ENCODE measurements at regions of chr22 and their contacts with region 1.

Region 1: GRCh38 chr22:29553351-29554224 is at the start of gene THOC5:
- DNase-seq: peak; percentile 86 to 91 (median 87)
- H3K4me3 ChIP-seq: peak within 1 kb of the TSS; percentile 69 to 95
- H3K4me3 Mint-ChIP-seq: peak within 1 kb of the TSS; percentile 92 to 99 (median 97)
- H3K27ac ChIP-seq: peak within 1 kb of the TSS; percentile 65
- H3K27ac Mint-ChIP-seq: peak within 1 kb of the TSS; percentile 87 to 99 (median 98)
- H3K4me1 ChIP-seq: peaks cover 8% of the 10 kb centered on the region
- H3K4me1 Mint-ChIP-seq: peaks cover 14 to 40% (median 27%) of the 10 kb centered on the region in 4 donors
- H3K27me3 ChIP-seq: no peaks in the 10 kb centered on the region
- H3K27me3 Mint-ChIP-seq: no peaks in the 10 kb centered on the region
- total RNA-seq, gene THOC5: 57.6 to 57.7 TPM

Region 2: DNA sequence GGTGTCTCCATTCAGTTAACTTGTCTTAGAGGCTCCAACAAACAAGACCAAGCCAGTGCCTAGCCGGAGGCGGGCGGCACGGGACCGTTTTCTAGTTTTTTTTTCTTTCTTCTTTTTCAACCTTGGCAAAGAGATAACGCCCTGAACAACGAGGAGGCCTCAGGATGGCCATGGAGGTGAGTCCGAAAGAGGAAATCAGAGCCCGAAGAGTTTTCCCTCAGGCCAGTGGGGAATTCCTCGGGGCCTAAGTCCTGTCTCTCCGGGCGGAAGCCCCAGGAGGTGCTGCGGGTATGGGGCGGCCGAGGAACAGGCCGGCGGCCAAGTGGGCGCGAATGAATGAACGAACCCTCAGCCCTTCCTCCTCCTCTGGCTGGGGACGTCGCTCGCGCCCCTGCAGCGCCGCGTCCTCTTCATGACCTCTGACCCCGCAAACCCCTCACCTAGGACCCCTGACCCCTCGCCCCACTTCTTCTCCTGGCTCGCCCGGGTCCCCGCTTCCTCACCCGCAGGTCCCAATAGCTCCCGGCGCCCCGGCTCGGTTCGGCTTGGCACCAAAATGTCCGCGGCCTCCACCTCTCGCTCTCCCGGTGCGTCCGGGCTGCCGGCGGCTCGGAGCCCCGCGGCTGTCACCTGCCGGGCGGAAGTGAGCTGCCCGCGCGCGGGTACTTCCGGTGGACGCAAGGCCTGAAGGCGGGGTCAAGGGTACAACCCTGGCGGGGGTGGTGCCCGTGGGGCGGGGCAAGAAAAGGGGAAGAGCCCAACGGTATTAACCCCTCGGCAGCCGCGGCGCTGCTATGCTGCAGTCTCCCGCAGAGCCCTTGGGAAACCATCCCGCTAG is 165.4 kb before region 1 on chr22 and contains the start of gene AP1B1:
- CTCF ChIA-PET with region 1: interaction called, 4 read pairs
- POLR2A ChIA-PET with region 1: interaction called, 4 read pairs
- intact Hi-C with region 1: loop called (anchors 2 kb)
- DNase-seq: peak; percentile 87 to 91 (median 88)
- H3K4me3 ChIP-seq: peak within 1 kb of the TSS; percentile 64 to 77
- H3K4me3 Mint-ChIP-seq: peak within 1 kb of the TSS; percentile 89 to 98 (median 93)
- H3K27ac ChIP-seq: peak within 1 kb of the TSS; percentile 86
- H3K27ac Mint-ChIP-seq: peak within 1 kb of the TSS; percentile 90 to 96 (median 95)
- H3K4me1 ChIP-seq: peaks cover 54% of the 10 kb centered on the region
- H3K4me1 Mint-ChIP-seq: peaks cover 26 to 54% (median 39%) of the 10 kb centered on the region in 4 donors
- H3K27me3 ChIP-seq: no peaks in the 10 kb centered on the region
- H3K27me3 Mint-ChIP-seq: no peaks in the 10 kb centered on the region
- total RNA-seq, gene AP1B1: 41.3 to 42.7 TPM

Region 3: DNA sequence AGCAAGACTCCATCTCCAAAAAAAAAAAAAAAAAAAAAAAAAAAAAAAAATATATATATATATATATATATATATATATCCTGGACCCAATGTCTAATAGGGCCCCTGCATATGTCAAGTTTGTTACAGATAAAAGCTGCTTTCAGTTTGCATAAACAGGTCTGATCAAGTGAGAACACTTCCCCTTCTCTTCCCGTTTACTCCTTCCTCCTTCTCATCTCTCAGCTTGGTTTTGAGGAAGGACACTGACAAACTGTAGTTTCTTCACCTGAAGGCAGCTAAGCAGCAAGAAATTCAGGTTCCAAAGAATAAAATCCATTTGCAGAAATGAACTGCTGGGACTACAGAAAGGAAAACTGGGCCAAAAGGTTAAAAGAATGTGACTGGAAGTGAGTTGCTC is 11.7 kb before region 1 on chr22:
- CTCF ChIA-PET with region 1: interaction called, 4 read pairs
- POLR2A ChIA-PET with region 1: interaction called, 11 read pairs
- intact Hi-C with region 1: no loop called
- DNase-seq: no peak
- H3K4me3 ChIP-seq: no peak overlapping the region
- H3K4me3 Mint-ChIP-seq: no peak overlapping the region
- H3K27ac ChIP-seq: no peak overlapping the region
- H3K27ac Mint-ChIP-seq: no peak overlapping the region
- H3K4me1 ChIP-seq: no peaks in the 10 kb centered on the region
- H3K4me1 Mint-ChIP-seq: peaks cover 0 to 3% (median under 1%) of the 10 kb centered on the region in 4 donors
- H3K27me3 ChIP-seq: no peaks in the 10 kb centered on the region
- H3K27me3 Mint-ChIP-seq: no peaks in the 10 kb centered on the region

Region 4: GRCh38 chr22:29580200-29580810 is 26.7 kb after region 1 on chr22:
- CTCF ChIA-PET with region 1: no interaction called
- POLR2A ChIA-PET with region 1: interaction called, 11 read pairs
- intact Hi-C with region 1: loop called (anchors 1 kb)
- DNase-seq: peak in 1 of 5 donors; percentile 5
- H3K4me3 ChIP-seq: peak overlapping the region in 1 of 2 donors; percentile 61
- H3K4me3 Mint-ChIP-seq: peak overlapping the region; percentile 90 to 97 (median 95)
- H3K27ac ChIP-seq: peak overlapping the region; percentile 58
- H3K27ac Mint-ChIP-seq: peak overlapping the region; percentile 85 to 95 (median 94)
- H3K4me1 ChIP-seq: peaks cover 14% of the 10 kb centered on the region
- H3K4me1 Mint-ChIP-seq: peaks cover 5 to 26% (median 14%) of the 10 kb centered on the region in 4 donors
- H3K27me3 ChIP-seq: no peaks in the 10 kb centered on the region
- H3K27me3 Mint-ChIP-seq: no peaks in the 10 kb centered on the region

Region 5: GRCh38 chr22:29587938-29588699 is 34.5 kb after region 1 on chr22:
- CTCF ChIA-PET with region 1: interaction called, 13 read pairs
- POLR2A ChIA-PET with region 1: interaction called, 11 read pairs
- intact Hi-C with region 1: no loop called
- DNase-seq: no peak
- H3K4me3 ChIP-seq: no peak overlapping the region
- H3K4me3 Mint-ChIP-seq: no peak overlapping the region
- H3K27ac ChIP-seq: no peak overlapping the region
- H3K27ac Mint-ChIP-seq: peak overlapping the region in 3 of 7 donors; percentile 18 to 60 (median 46)
- H3K4me1 ChIP-seq: peaks cover 8% of the 10 kb centered on the region
- H3K4me1 Mint-ChIP-seq: peaks cover 8 to 12% (median 10%) of the 10 kb centered on the region in 4 donors
- H3K27me3 ChIP-seq: no peaks in the 10 kb centered on the region
- H3K27me3 Mint-ChIP-seq: no peaks in the 10 kb centered on the region

Region 6: GRCh38 chr22:29820961-29821789 is 267.6 kb after region 1 on chr22:
- CTCF ChIA-PET with region 1: no interaction called
- POLR2A ChIA-PET with region 1: no interaction called
- intact Hi-C with region 1: no loop called
- DNase-seq: no peak
- H3K4me3 ChIP-seq: no peak overlapping the region
- H3K4me3 Mint-ChIP-seq: no peak overlapping the region
- H3K27ac ChIP-seq: no peak overlapping the region
- H3K27ac Mint-ChIP-seq: no peak overlapping the region
- H3K4me1 ChIP-seq: no peaks in the 10 kb centered on the region
- H3K4me1 Mint-ChIP-seq: peaks cover 0 to 2% (median 0%) of the 10 kb centered on the region in 4 donors
- H3K27me3 ChIP-seq: no peaks in the 10 kb centered on the region
- H3K27me3 Mint-ChIP-seq: no peaks in the 10 kb centered on the region

Region 7: GRCh38 chr22:29837780-29838598 is 284.4 kb after region 1 on chr22 and contains the start of gene ASCC2:
- CTCF ChIA-PET with region 1: no interaction called
- POLR2A ChIA-PET with region 1: interaction called, 12 read pairs
- intact Hi-C with region 1: no loop called
- DNase-seq: peak; percentile 96 to 99 (median 98)
- H3K4me3 ChIP-seq: peak within 1 kb of the TSS; percentile 80 to 89
- H3K4me3 Mint-ChIP-seq: peak within 1 kb of the TSS; percentile 93 to 99 (median 97)
- H3K27ac ChIP-seq: peak within 1 kb of the TSS; percentile 72
- H3K27ac Mint-ChIP-seq: peak within 1 kb of the TSS; percentile 94 to 99 (median 98)
- H3K4me1 ChIP-seq: peaks cover 32% of the 10 kb centered on the region
- H3K4me1 Mint-ChIP-seq: peaks cover 29 to 48% (median 35%) of the 10 kb centered on the region in 4 donors
- H3K27me3 ChIP-seq: no peaks in the 10 kb centered on the region
- H3K27me3 Mint-ChIP-seq: no peaks in the 10 kb centered on the region
- total RNA-seq, gene ASCC2: 82.3 to 88.7 TPM

Measured in CD4-positive, alpha-beta memory T cell (primary cell).